Heart left ventricle (tissue), 16 donors: ENCODE measurements at regions of chr12 and their contacts with region 1.

Region 1: GRCh38 chr12:12207746-12208145 is 59.1 kb downstream of the LRP6 start:
- DNase-seq: no peak
- ATAC-seq: no peak
- H3K4me3 ChIP-seq: no peak overlapping the region
- H3K27ac ChIP-seq: no peak overlapping the region
- H3K4me1 ChIP-seq: peaks cover 0 to 7% (median 0%) of the 10 kb centered on the region in 12 donors
- H3K27me3 ChIP-seq: no peaks in the 10 kb centered on the region
- CTCF ChIP-seq: no peak
- POLR2A ChIP-seq: no peak

Region 2: GRCh38 chr12:12167847-12168246 is 39.9 kb before region 1 on chr12:
- intact Hi-C with region 1: loop called in 1 of 10 experiments (anchors 2 kb)
- DNase-seq: no peak
- ATAC-seq: no peak
- H3K4me3 ChIP-seq: no peak overlapping the region
- H3K27ac ChIP-seq: no peak overlapping the region
- H3K4me1 ChIP-seq: peaks cover 0 to 12% (median 2%) of the 10 kb centered on the region in 12 donors
- H3K27me3 ChIP-seq: no peaks in the 10 kb centered on the region
- CTCF ChIP-seq: no peak
- POLR2A ChIP-seq: no peak

Region 3: GRCh38 chr12:12229556-12230092 is 21.9 kb after region 1 on chr12:
- intact Hi-C with region 1: no loop called
- DNase-seq: no peak
- ATAC-seq: no peak
- H3K4me3 ChIP-seq: no peak overlapping the region
- H3K27ac ChIP-seq: no peak overlapping the region
- H3K4me1 ChIP-seq: peaks cover 0 to 21% (median 7%) of the 10 kb centered on the region in 12 donors
- H3K27me3 ChIP-seq: no peaks in the 10 kb centered on the region
- CTCF ChIP-seq: no peak
- POLR2A ChIP-seq: no peak

Region 4: DNA sequence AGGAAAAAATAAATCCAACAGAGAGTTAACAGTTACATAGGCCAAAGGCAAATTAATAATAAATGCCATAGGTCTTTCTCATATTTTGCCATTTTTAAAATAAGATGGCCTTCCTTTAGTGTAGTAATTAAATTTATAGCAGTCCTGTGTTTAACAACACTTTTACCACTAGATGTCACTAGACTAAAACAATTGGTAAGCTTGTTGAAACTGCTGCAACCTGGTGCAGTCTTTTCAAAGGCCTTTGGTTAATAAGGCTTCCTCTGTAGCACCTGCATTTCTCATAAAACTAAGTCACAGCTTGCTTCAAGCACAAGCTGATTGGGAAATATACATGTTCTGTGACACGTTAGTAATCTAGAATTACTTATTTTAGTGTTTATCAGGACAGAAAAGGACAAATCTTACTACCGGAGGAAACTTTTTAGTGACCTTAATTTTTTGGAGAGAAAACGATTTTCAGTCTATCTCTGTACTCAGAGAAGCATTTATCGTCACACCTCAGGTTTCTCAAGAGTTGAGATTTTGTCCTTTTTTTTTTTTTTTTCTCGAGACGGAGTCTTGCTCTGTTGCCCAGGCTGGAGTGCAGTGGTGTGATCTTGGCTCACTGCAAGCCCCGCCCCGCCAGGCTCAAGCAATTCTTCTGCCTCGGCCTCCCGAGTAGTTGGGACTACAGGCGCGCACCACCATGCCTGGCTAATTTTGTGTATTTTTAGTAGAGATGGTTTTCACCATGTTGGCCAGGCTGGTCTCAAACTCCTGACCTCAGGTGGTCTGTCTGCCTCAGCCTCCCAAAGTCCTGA is 169.1 kb after region 1 on chr12:
- intact Hi-C with region 1: no loop called
- DNase-seq: no peak
- ATAC-seq: peak; percentile 63 to 83 (median 74)
- H3K4me3 ChIP-seq: no peak overlapping the region
- H3K27ac ChIP-seq: no peak overlapping the region
- H3K4me1 ChIP-seq: peaks cover 0 to 15% (median 9%) of the 10 kb centered on the region in 12 donors
- H3K27me3 ChIP-seq: no peaks in the 10 kb centered on the region
- CTCF ChIP-seq: peak; percentile 63 to 85 (median 76)
- POLR2A ChIP-seq: no peak